Spleen (tissue), 13 donors: ENCODE measurements at regions of chr17 and their contacts with region 1.

Region 1: DNA sequence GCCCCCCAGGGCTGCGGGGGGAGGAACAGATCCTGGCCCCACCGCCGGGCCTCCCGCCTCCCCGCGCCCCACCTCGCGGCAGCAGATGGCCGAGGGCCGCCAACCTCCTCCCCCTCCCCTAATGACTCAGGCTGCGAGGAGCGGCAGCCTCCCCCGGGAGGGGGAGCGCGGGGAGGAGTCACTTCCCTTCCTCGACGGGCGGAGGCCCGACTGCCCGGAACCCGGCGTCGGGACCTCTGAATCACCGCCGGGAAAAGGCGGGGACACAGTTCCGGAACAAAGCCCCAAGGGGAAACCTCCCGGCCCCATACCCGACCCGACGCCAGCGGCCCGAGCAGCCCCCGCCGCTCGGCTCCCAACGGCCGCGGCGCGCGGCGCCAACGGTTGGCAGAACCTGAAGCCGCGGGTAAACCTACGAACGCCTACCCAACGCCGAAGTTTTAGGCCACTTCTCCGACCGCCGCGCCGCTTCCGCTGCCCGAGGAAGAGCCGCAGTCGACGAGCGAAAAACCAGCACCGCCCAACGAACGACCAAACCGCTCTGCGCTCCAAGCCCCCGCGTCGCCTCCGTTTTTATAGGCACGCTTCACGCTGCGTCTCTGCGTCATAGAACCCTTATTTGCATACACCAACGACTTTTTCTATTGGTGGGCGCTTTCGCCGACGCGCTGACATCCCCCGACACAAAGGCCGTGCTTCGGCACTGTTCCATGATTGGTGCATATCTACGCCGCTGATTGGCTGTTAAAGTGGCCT is 5.2 kb upstream of the UNK start:
- DNase-seq: peak; percentile 97
- H3K4me3 ChIP-seq: peak overlapping the region; percentile 70 to 99 (median 92)
- H3K27ac ChIP-seq: peak overlapping the region; percentile 97 to 100 (median 98)
- H3K4me1 ChIP-seq: peaks cover 46 to 86% (median 70%) of the 10 kb centered on the region in 6 donors
- H3K27me3 ChIP-seq: no peaks in the 10 kb centered on the region
- CTCF ChIP-seq: peak in 3 of 11 experiments; percentile 4 to 33 (median 31)
- POLR2A ChIP-seq: peak; percentile 100

Region 2: GRCh38 chr17:75845049-75845860 is 65.8 kb after region 1 on chr17:
- intact Hi-C with region 1: loop called (anchors 5 kb)
- DNase-seq: peak; percentile 94
- H3K4me3 ChIP-seq: peak overlapping the region in 6 of 8 donors; percentile 36 to 80 (median 58)
- H3K27ac ChIP-seq: peak overlapping the region; percentile 57 to 98 (median 96)
- H3K4me1 ChIP-seq: peaks cover 53 to 100% (median 87%) of the 10 kb centered on the region in 6 donors
- H3K27me3 ChIP-seq: no peaks in the 10 kb centered on the region
- CTCF ChIP-seq: peak; percentile 76 to 99 (median 93)
- POLR2A ChIP-seq: no peak

Region 3: DNA sequence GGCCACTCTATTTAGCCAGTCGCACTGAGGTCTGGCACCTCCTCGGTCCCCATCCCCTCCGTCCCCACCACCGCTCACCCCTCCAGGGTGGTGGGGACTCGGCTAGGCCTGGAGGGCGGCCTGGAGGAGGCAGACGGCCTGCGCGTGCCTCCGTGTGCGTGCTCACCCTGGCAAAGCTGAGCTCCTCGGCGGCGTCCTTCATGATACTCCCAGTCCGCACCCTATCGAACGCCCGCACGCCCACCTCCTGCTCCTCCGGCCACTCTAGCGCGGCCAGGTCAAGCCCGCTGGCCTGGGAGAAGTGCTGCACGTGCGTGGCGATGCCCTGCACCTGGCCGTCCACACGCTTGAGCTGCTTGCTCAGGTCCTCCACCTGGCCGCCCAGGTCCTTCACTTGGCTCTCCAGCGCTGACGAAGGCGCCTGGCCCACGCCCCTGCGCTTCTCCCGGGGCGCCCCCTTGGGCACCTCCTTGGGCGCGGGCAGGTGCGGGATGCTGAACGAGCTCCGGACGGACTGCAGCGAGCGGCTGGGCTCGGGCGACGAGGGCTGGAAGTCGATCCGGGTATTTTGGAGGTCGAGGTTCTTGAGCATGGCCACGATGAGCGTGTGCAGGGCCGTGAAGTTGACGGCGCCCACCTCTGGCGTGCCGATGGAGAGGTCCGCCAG is 528.0 kb after region 1 on chr17:
- intact Hi-C with region 1: no loop called
- DNase-seq: peak; percentile 59
- H3K4me3 ChIP-seq: no peak overlapping the region
- H3K27ac ChIP-seq: no peak overlapping the region
- H3K4me1 ChIP-seq: peaks cover 0 to 6% (median 0%) of the 10 kb centered on the region in 6 donors
- H3K27me3 ChIP-seq: no peaks in the 10 kb centered on the region
- CTCF ChIP-seq: no peak
- POLR2A ChIP-seq: no peak